ENCODE measurements at regions of chr7 and their contacts with region 1.

Region 1: GRCh38 chr7:30170476-30171205 is 35.9 kb downstream of the MTURN start:
- DNase-seq: no peak
- ATAC-seq: no peak
- H3K4me3 ChIP-seq: no peak overlapping the region
- H3K27ac ChIP-seq: no peak overlapping the region
- H3K4me1 ChIP-seq: no peaks in the 10 kb centered on the region
- H3K27me3 ChIP-seq: peaks cover 2% of the 10 kb centered on the region; the same call in 1 of the 2 replicates
- CTCF ChIP-seq: no peak

Region 2: GRCh38 chr7:29900745-29901144 is 269.9 kb before region 1 on chr7:
- CTCF ChIA-PET with region 1: no interaction called
- POLR2A ChIA-PET with region 1: interaction called, 16 read pairs
- in situ Hi-C with region 1: no loop called
- intact Hi-C with region 1: no loop called
- DNase-seq: no peak
- ATAC-seq: peak; percentile 68
- H3K4me3 ChIP-seq: no peak overlapping the region
- H3K27ac ChIP-seq: no peak overlapping the region
- H3K4me1 ChIP-seq: no peaks in the 10 kb centered on the region
- H3K27me3 ChIP-seq: no peaks in the 10 kb centered on the region
- CTCF ChIP-seq: no peak

Region 3: DNA sequence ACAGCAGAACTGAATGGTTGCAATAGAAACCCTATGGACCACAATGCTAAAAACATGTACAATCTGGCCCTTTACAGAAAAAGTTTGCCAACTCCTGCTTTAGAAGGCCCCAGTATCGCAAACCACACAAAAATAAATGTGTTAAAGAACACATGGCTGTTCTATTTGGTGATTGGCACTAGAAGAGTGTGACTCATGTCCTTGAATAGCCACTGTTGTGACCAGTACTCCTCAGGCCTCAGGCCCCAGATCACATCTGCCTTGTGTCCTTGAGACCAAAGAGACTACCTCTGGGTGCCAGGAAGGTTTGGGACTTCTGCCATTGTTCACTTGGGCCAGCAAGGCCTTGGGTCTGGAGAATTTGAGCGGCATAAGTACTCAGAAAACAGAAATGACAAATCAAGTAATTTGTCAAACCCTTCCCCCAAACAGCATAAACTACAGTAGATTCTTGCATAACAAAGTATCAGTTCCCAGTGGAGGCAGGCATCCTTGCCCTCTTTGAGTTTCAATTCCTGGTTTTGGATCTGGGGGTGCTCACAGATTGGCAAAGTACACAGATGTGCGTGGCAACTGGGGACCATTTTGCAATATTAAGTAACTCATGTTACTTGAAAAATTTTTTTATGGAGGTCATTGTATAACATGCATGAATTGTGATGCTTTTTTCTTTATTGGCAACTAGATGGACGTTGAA is 14.3 kb after region 1 on chr7:
- CTCF ChIA-PET with region 1: no interaction called
- POLR2A ChIA-PET with region 1: no interaction called
- in situ Hi-C with region 1: no loop called
- intact Hi-C with region 1: no loop called
- DNase-seq: no peak
- ATAC-seq: no peak
- H3K4me3 ChIP-seq: no peak overlapping the region
- H3K27ac ChIP-seq: no peak overlapping the region
- H3K4me1 ChIP-seq: no peaks in the 10 kb centered on the region
- H3K27me3 ChIP-seq: no peaks in the 10 kb centered on the region
- CTCF ChIP-seq: no peak

Region 4: GRCh38 chr7:30225863-30226613 is 55.4 kb after region 1 on chr7:
- CTCF ChIA-PET with region 1: no interaction called
- POLR2A ChIA-PET with region 1: no interaction called
- in situ Hi-C with region 1: no loop called
- intact Hi-C with region 1: no loop called
- DNase-seq: no peak
- ATAC-seq: peak; percentile 28; the same call in 1 of the 2 replicates
- H3K4me3 ChIP-seq: no peak overlapping the region
- H3K27ac ChIP-seq: no peak overlapping the region
- H3K4me1 ChIP-seq: 0 out of 2 replicates have a peak, but pooled peaks cover 3% of the 10 kb centered on the region
- H3K27me3 ChIP-seq: peaks cover 5% of the 10 kb centered on the region
- CTCF ChIP-seq: no peak

Measured in Panc1 (cell line).